Activated T-helper 1 cell treated with anti-CD3 and anti-CD28 coated beads, Interleukin-12 subunit alpha, Interleukin-12 subunit beta, Interleukin-2, Interleukin-4 antibody, amounts not matched to agents 30 ng/mL and 10 ng/mL and 1 ng/mL, durations not matched to agents 14 hours and 24 hours and 36 hours (primary cell): ENCODE measurements at regions of chr3 and their contacts with region 1.

Region 1: GRCh38 chr3:12994607-12995388 is 78.4 kb downstream of the IQSEC1 start:
- DNase-seq: peak; percentile 82
- H3K4me3 Mint-ChIP-seq: peak overlapping the region; percentile 83
- H3K27ac Mint-ChIP-seq: peak overlapping the region; percentile 81
- H3K4me1 Mint-ChIP-seq: peaks cover 30% of the 10 kb centered on the region
- H3K27me3 Mint-ChIP-seq: peaks cover 2% of the 10 kb centered on the region

Region 2: DNA sequence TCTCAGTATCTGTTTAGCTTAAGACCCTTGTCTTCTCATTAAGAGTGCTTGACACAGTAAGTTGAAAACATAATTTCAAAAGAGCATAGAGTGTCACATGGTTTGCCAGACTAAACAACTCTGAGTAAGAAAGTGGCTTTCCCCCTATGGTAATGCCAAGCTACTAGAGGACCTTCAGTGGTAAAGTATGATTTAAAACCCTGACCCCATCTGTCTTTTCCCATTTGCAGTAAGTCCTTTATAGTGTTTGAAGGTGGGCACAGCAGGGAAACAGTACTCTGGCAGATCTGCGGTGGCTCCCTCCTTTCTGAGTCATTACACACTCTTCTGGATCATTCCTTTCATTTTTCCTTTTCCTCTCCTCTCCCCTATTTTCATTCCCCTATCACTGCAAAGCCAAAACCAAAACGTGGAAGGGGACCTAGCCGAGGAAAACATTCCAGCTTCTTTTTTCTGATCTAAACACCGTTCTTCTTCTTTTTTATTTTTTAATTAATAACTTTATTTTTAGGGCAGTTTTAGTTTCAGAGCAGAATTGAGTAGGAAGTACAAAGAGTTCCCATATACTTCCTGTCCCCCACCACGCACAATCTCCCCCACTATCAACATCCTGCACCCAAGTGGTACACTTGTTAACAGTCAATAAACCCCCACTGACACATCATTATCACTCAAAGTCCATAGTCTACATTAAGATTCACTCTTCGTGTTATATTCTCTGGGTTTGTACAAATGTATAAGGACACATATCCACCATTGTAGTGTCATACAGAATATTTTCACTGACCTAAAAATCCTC is 631.2 kb before region 1 on chr3:
- intact Hi-C with region 1: no loop called
- DNase-seq: no peak
- H3K4me3 Mint-ChIP-seq: no peak overlapping the region
- H3K27ac Mint-ChIP-seq: no peak overlapping the region
- H3K4me1 Mint-ChIP-seq: no peaks in the 10 kb centered on the region
- H3K27me3 Mint-ChIP-seq: peaks cover 2% of the 10 kb centered on the region

Region 3: DNA sequence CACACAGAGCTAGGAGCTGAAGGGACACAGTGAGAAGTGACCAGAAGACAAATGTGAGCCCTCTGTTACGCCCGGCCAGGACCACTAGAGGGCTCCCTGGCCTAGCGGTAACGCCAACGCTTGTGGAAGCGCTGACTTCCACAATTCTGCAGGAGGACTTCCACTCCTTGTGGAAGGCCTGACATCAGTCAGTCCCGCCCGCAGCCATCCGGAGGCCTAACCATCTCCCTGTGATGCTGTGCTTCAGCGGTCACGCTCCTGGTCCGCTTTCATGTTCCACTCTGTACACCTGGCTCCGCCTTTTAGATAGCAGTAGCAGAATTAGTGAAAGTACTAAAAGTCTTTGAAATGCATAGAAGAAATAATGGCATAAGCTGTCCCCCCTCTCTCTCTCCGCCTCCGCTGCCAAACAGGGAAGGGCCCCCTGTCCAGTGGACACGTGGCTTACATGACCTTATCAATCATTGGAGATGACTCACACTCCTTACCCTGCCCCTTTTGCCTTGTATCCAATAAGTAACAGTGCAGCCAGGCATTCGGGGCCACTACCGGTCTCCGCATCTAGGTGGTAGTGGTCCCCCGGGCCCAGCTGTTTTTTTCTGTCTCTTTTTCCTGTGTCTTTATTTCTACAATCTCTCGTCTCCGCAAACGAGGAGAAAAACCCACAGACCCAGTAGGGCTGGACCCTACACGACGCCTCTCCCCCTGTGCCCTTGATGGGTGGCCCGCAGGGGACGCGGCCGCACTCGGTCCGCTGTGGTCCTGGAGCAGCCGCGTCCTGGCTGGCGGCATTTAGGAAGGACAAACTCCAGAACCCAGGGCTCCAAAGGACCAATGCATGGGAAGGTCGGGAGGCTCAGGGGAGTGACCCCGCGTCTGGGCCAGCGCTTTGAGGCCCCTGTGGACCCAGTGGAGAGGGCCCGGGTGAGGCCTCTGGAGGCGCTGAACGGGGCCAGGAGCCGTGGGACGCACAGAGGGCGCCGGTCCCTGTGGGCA is 126.5 kb before region 1 on chr3:
- intact Hi-C with region 1: loop called (anchors 1 kb)
- DNase-seq: peak; percentile 43
- H3K4me3 Mint-ChIP-seq: peak overlapping the region; percentile 65
- H3K27ac Mint-ChIP-seq: no peak overlapping the region
- H3K4me1 Mint-ChIP-seq: peaks cover 17% of the 10 kb centered on the region
- H3K27me3 Mint-ChIP-seq: peaks cover 29% of the 10 kb centered on the region